ENCODE measurements at regions of chr5 and their contacts with region 1.

Region 1: GRCh38 chr5:54344653-54345052 is 34.3 kb upstream of the ARL15 start:
- DNase-seq: no peak
- H3K4me3 Mint-ChIP-seq: no peak overlapping the region
- H3K27ac Mint-ChIP-seq: no peak overlapping the region
- H3K4me1 Mint-ChIP-seq: no peaks in the 10 kb centered on the region
- H3K27me3 Mint-ChIP-seq: no peaks in the 10 kb centered on the region
- CTCF ChIP-seq: no peak

Region 2: GRCh38 chr5:54285686-54286085 is 59.0 kb before region 1 on chr5:
- CTCF ChIA-PET with region 1: no interaction called
- POLR2A ChIA-PET with region 1: no interaction called
- intact Hi-C with region 1: no loop called
- DNase-seq: no peak
- H3K4me3 Mint-ChIP-seq: no peak overlapping the region
- H3K27ac Mint-ChIP-seq: no peak overlapping the region
- H3K4me1 Mint-ChIP-seq: no peaks in the 10 kb centered on the region
- H3K27me3 Mint-ChIP-seq: no peaks in the 10 kb centered on the region
- CTCF ChIP-seq: no peak

Region 3: DNA sequence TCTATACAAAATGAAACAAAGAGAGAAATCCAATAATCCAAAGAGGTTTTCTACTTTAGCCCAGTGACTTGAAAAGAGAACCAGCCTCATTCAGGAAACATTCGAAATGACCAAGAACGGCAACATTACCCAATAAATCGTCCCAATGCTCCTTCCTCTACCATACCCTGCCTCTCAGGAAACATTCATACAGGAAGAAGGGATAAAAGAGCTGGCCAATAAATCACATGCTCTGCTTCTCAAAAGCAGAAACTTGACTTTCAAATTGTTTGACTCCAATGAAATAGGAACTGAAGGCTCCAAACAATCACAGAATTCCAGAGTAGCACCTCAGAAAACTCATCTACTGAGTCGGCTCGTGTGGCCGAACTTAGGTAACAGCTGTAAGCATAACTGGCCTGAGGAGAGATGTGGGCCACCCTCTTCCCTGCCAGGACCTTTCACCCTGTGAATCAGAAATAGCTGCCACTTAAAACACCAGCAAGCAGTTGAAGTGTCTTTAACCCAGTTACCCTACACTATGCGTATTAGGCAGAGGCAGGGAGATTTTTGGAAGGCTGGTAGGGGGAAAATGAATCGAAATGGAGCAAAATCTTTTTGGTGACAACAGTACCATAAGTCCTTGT is 48.9 kb before region 1 on chr5:
- CTCF ChIA-PET with region 1: no interaction called
- POLR2A ChIA-PET with region 1: no interaction called
- intact Hi-C with region 1: no loop called
- DNase-seq: no peak
- H3K4me3 Mint-ChIP-seq: no peak overlapping the region
- H3K27ac Mint-ChIP-seq: no peak overlapping the region
- H3K4me1 Mint-ChIP-seq: peaks cover 12% of the 10 kb centered on the region
- H3K27me3 Mint-ChIP-seq: no peaks in the 10 kb centered on the region
- CTCF ChIP-seq: no peak

Region 4: GRCh38 chr5:54329731-54330709 is 14.6 kb before region 1 on chr5:
- CTCF ChIA-PET with region 1: interaction called, 4 read pairs
- POLR2A ChIA-PET with region 1: interaction called, 11 read pairs
- intact Hi-C with region 1: no loop called
- DNase-seq: peak; percentile 75
- H3K4me3 Mint-ChIP-seq: no peak overlapping the region
- H3K27ac Mint-ChIP-seq: no peak overlapping the region
- H3K4me1 Mint-ChIP-seq: peaks cover 16% of the 10 kb centered on the region
- H3K27me3 Mint-ChIP-seq: no peaks in the 10 kb centered on the region
- CTCF ChIP-seq: no peak